GM10248 (cell line): ENCODE measurements at regions of chr12 and their contacts with region 1.

Region 1: DNA sequence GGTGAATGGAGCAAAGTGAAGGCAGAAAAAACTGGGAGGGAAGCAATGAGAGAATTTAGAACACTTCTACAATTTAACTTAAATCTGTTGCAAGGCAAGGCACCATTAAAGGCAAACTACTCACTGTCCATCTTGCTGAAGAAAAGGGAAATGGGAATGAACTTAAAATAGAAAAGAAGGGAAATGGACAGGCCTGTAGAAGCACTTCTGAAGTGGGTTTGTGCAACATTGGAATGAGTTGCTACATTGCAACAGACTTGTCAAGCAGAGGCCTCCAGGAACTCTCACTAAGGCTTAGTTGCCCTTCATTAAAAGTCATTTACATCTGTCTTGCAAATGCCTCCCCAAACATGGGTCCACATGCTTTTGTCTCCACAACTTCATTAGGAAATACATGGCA is 13.7 kb upstream of the OR10AD1 start:
- DNase-seq: no peak
- CTCF ChIP-seq: no peak

Region 2: GRCh38 chr12:48189331-48190125 is 27.3 kb before region 1 on chr12:
- CTCF ChIA-PET with region 1: interaction called, 12 read pairs
- POLR2A ChIA-PET with region 1: no interaction called
- DNase-seq: peak; percentile 62
- CTCF ChIP-seq: peak; percentile 88

Region 3: GRCh38 chr12:48247181-48247966 is 30.6 kb after region 1 on chr12:
- CTCF ChIA-PET with region 1: no interaction called
- POLR2A ChIA-PET with region 1: no interaction called
- DNase-seq: no peak
- CTCF ChIP-seq: no peak